Calu3 (cell line): ENCODE measurements at regions of chr12 and their contacts with region 1.

Region 1: DNA sequence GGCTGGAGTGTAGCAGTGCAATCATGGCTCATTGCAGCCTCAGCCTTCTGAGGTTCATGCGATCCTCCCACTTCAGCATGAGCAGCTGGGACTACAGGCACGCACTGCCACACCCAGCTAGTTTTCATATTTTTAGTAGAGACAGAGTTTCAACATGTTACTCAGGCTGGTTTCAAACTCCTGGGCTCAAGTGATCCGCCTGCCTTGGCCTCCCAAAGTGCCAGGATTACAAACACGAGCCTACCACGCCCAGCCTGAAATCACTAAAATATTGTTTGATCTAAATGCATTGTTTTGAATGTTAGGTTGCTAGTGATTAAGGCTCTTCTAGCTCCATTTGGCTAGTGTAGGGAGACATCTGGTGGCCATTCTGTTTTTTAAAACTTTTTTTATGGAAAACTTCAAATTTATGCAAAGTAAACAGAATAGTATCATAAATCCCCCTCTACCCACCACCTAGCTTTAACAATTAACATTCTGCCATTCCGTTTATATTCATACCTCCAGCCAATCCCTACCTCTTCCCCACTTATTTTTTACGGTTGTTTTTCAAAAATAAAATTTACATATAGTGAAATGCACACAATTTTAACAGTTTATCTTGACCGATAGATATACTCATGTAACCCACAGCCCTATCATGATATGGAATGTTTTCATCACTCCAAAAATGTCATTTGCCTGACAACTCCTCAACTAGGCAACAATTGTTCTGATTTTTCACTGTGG is 37.8 kb downstream of the MYO1H start:
- DNase-seq: peak; percentile 4
- H3K4me3 Mint-ChIP-seq: no peak overlapping the region
- H3K27ac Mint-ChIP-seq: no peak overlapping the region
- H3K4me1 Mint-ChIP-seq: peaks cover 15% of the 10 kb centered on the region
- H3K27me3 Mint-ChIP-seq: peaks cover 59% of the 10 kb centered on the region
- CTCF ChIP-seq: peak; percentile 53

Region 2: DNA sequence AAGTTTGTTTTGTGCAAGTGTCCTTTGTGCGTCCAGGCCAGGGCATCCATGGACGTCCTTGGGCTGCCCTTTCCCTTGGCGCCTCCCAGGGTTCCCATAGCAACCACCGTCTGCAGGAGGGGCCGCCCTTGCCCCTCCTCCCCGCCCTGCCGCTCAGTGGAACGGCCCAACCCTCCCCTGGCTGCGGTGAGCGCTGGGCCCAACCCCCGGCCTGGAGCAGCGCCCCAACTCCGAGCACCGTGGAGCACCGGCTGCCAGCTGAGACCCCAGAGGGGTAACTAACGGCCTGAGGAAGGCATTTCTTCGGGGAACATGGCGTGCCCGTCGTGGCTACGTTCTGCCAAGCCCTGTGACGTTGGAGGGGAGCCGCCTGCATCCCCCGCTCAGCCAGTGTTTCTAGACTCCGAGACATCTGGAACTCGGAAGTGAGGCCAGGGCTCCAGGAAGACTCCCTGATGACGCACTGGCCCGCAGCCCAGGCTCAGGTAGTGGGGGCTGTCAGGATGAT is 274.5 kb before region 1 on chr12:
- CTCF ChIA-PET with region 1: interaction called, 16 read pairs
- intact Hi-C with region 1: loop called (anchors 2 kb)
- DNase-seq: peak; percentile 64
- H3K4me3 Mint-ChIP-seq: peak overlapping the region; percentile 69
- H3K27ac Mint-ChIP-seq: peak overlapping the region; percentile 50
- H3K4me1 Mint-ChIP-seq: peaks cover 16% of the 10 kb centered on the region
- H3K27me3 Mint-ChIP-seq: no peaks in the 10 kb centered on the region
- CTCF ChIP-seq: no peak

Region 3: DNA sequence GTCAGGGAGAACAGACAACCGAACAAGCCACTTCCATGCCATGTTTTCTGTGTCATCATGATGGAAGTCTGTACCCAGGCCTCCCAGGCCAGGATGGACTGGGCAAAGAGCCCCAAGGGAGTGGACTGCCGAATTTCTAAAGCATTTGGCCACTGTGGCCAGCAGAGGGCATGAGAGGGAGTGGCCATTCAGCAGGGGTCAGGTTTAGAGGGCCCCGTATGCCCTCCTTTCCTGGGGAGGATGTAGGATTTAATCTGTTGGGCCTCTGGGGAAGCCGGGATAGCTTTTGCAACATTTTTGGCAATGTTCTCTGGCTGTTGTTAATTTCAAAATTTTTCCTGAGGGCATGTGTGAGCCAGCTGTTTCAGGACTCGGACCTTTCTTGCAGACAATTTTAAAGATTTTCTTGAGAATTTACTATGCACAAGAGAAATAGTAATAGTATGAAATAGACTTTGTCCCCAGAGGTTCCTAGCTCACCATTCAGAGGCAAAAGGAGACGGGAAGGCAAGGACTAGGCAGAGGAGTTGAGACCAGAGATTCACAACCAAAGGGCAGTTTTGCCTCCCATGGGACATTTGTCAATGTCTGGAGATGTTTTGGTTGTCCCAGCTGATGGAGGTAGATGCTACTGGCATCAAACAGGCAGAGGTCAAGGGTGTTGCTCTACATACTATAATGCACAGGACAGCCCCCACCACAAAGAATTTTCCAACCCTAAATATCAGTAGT is 251.2 kb before region 1 on chr12:
- CTCF ChIA-PET with region 1: no interaction called
- intact Hi-C with region 1: loop called (anchors 1 kb)
- DNase-seq: peak; percentile 51
- H3K4me3 Mint-ChIP-seq: no peak overlapping the region
- H3K27ac Mint-ChIP-seq: no peak overlapping the region
- H3K4me1 Mint-ChIP-seq: no peaks in the 10 kb centered on the region
- H3K27me3 Mint-ChIP-seq: peaks cover 52% of the 10 kb centered on the region
- CTCF ChIP-seq: peak; percentile 72

Region 4: GRCh38 chr12:109264095-109264942 is 121.2 kb before region 1 on chr12:
- CTCF ChIA-PET with region 1: interaction called, 43 read pairs
- intact Hi-C with region 1: loop called (anchors 1 kb)
- DNase-seq: peak; percentile 92
- H3K4me3 Mint-ChIP-seq: no peak overlapping the region
- H3K27ac Mint-ChIP-seq: no peak overlapping the region
- H3K4me1 Mint-ChIP-seq: no peaks in the 10 kb centered on the region
- H3K27me3 Mint-ChIP-seq: no peaks in the 10 kb centered on the region
- CTCF ChIP-seq: peak; percentile 91